ENCODE measurements at regions of chr2 and their contacts with region 1.

Region 1: GRCh38 chr2:10408649-10409579 is 39.2 kb downstream of the ODC1 start:
- DNase-seq: peak; percentile 89

Region 2: DNA sequence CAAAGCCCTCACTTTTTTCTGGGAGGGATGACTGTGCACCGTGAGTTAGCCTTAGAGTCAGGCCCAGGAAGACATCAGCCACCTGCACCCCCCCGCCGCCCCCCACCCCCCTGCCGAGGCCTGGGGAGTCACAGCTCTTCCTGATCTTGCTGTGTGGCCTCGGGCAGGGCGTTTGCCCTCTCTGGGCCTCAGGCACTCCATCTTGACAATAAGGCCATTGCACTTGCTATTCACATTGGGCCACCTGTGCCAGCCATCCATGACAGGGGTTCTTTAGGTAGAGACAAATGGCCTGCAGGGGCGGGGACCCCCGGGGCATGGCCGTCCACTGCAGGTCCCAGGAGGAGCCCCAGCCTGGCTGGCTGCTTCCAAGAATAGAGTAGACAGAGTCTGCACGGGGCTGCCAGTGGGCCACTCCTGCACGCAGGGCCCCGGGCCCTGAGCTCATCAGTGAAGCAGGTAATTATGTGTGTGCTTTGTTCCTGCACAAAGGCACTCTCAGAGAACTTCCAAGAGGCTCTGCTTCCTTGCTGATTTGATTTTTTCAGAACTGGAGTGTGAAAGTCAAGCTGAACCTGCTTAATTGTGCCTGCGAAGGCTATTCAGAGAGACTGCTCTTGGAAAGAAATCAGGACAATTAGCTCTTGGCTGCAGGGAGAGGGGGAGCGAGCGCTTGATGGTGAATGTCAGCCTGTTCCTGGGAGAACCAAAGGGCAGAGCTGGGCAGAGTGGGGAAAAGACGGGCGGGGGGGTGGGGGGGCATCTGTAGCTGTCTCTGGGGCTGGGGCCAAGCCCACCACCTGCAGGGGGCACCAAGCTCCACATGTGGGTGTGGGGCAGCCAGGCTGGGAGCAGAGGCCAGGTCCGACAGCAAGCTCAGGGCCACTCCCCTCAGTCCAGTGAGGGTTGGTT is 246.1 kb before region 1 on chr2:
- in situ Hi-C with region 1: no loop called
- DNase-seq: peak; percentile 18

Region 3: GRCh38 chr2:10254373-10255151 is 154.4 kb before region 1 on chr2:
- in situ Hi-C with region 1: loop called (anchors 25 kb)
- DNase-seq: no peak

Measured in ACHN (cell line).